CD4-positive, alpha-beta memory T cell (primary cell): ENCODE measurements at regions of chr10 and their contacts with region 1.

Region 1: GRCh38 chr10:110210674-110211464 is 3.5 kb downstream of the MXI1 start:
- DNase-seq: peak; percentile 87 to 93 (median 88)
- H3K4me3 ChIP-seq: peak overlapping the region; percentile 42 to 78
- H3K4me3 Mint-ChIP-seq: peak overlapping the region; percentile 91 to 99 (median 94)
- H3K27ac ChIP-seq: peak overlapping the region; percentile 92
- H3K27ac Mint-ChIP-seq: peak overlapping the region; percentile 94 to 99 (median 97)
- H3K4me1 ChIP-seq: peaks cover 59% of the 10 kb centered on the region
- H3K4me1 Mint-ChIP-seq: peaks cover 43 to 86% (median 52%) of the 10 kb centered on the region in 4 donors
- H3K27me3 ChIP-seq: no peaks in the 10 kb centered on the region
- H3K27me3 Mint-ChIP-seq: no peaks in the 10 kb centered on the region

Region 2: GRCh38 chr10:110137142-110137545 is 73.7 kb before region 1 on chr10:
- CTCF ChIA-PET with region 1: interaction called, 111 read pairs
- POLR2A ChIA-PET with region 1: interaction called, 134 read pairs
- intact Hi-C with region 1: loop called (anchors 1 kb)
- DNase-seq: peak; percentile 46 to 70 (median 66)
- H3K4me3 ChIP-seq: no peak overlapping the region
- H3K4me3 Mint-ChIP-seq: peak overlapping the region in 1 of 8 donors; percentile 0
- H3K27ac ChIP-seq: peak overlapping the region; percentile 7
- H3K27ac Mint-ChIP-seq: peak overlapping the region; percentile 7 to 83 (median 18)
- H3K4me1 ChIP-seq: peaks cover 24% of the 10 kb centered on the region
- H3K4me1 Mint-ChIP-seq: peaks cover 17 to 30% (median 26%) of the 10 kb centered on the region in 4 donors
- H3K27me3 ChIP-seq: no peaks in the 10 kb centered on the region
- H3K27me3 Mint-ChIP-seq: no peaks in the 10 kb centered on the region

Region 3: DNA sequence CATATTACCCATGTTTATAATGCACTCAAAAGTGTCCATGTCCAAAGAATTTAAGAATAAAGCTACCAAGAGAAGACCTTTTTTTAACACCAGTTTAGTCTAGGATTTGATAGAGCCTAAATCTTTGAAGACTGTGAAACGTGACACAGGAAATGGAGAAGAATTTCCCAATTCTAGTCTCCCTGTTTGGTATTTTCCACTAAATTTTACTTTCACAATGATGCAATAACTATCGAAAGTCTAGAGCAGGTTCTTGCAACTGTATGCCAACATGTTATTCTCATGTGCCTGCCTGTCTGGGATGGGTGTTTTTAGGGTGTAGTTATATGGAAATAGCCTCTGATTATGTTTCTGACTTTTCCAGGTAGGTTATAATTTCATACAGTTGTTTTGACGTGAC is 10.4 kb before region 1 on chr10:
- CTCF ChIA-PET with region 1: interaction called, 6 read pairs
- POLR2A ChIA-PET with region 1: interaction called, 13 read pairs
- intact Hi-C with region 1: no loop called
- DNase-seq: no peak
- H3K4me3 ChIP-seq: no peak overlapping the region
- H3K4me3 Mint-ChIP-seq: no peak overlapping the region
- H3K27ac ChIP-seq: no peak overlapping the region
- H3K27ac Mint-ChIP-seq: no peak overlapping the region
- H3K4me1 ChIP-seq: no peaks in the 10 kb centered on the region
- H3K4me1 Mint-ChIP-seq: peaks cover 0 to under 1% (median 0%) of the 10 kb centered on the region in 4 donors
- H3K27me3 ChIP-seq: peaks cover 6% of the 10 kb centered on the region
- H3K27me3 Mint-ChIP-seq: peaks cover 10 to 13% of the 10 kb centered on the region in 2 donors

Region 4: GRCh38 chr10:110254467-110254866 is 43.6 kb after region 1 on chr10:
- CTCF ChIA-PET with region 1: interaction called, 3 read pairs
- POLR2A ChIA-PET with region 1: interaction called, 12 read pairs
- intact Hi-C with region 1: no loop called
- DNase-seq: no peak
- H3K4me3 ChIP-seq: no peak overlapping the region
- H3K4me3 Mint-ChIP-seq: peak overlapping the region in 7 of 8 donors; percentile 4 to 70 (median 60)
- H3K27ac ChIP-seq: no peak overlapping the region
- H3K27ac Mint-ChIP-seq: peak overlapping the region in 5 of 7 donors; percentile 33 to 77 (median 53)
- H3K4me1 ChIP-seq: peaks cover 15% of the 10 kb centered on the region
- H3K4me1 Mint-ChIP-seq: peaks cover 24 to 43% (median 34%) of the 10 kb centered on the region in 4 donors
- H3K27me3 ChIP-seq: no peaks in the 10 kb centered on the region
- H3K27me3 Mint-ChIP-seq: no peaks in the 10 kb centered on the region

Region 5: GRCh38 chr10:110304780-110305421 is 94.0 kb after region 1 on chr10 and contains the start of gene SMNDC1:
- CTCF ChIA-PET with region 1: interaction called, 37 read pairs
- POLR2A ChIA-PET with region 1: interaction called, 81 read pairs
- intact Hi-C with region 1: loop called (anchors 1 kb)
- DNase-seq: peak; percentile 96 to 97 (median 96)
- H3K4me3 ChIP-seq: peak within 1 kb of the TSS; percentile 62 to 70
- H3K4me3 Mint-ChIP-seq: peak within 1 kb of the TSS; percentile 96 to 98 (median 98)
- H3K27ac ChIP-seq: peak within 1 kb of the TSS; percentile 81
- H3K27ac Mint-ChIP-seq: peak within 1 kb of the TSS; percentile 95 to 100 (median 99)
- H3K4me1 ChIP-seq: peaks cover 52% of the 10 kb centered on the region
- H3K4me1 Mint-ChIP-seq: peaks cover 27 to 58% (median 45%) of the 10 kb centered on the region in 4 donors
- H3K27me3 ChIP-seq: no peaks in the 10 kb centered on the region
- H3K27me3 Mint-ChIP-seq: no peaks in the 10 kb centered on the region
- total RNA-seq, gene SMNDC1: 39.0 to 39.3 TPM

Region 6: DNA sequence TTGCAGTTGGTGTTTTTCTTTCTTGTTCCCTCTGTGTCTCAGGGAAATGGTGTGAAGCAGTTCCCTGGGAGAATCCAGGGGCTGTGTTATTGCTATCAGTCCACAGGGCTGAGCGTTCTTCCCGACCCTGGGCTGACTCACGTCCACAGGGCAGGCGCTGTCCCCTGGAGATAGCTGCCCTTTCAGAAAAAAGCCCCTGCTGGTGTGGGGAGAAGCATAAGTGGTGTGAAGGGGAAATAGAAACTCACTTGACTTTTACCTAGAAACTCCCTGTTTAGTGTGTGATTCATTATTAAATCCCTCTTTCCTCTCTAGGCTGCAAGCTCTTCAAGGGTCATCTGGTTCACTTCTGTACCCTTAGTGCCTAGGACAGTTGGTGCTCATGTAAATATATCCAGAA is 157.1 kb after region 1 on chr10:
- CTCF ChIA-PET with region 1: no interaction called
- POLR2A ChIA-PET with region 1: no interaction called
- intact Hi-C with region 1: no loop called
- DNase-seq: no peak
- H3K4me3 ChIP-seq: no peak overlapping the region
- H3K4me3 Mint-ChIP-seq: no peak overlapping the region
- H3K27ac ChIP-seq: no peak overlapping the region
- H3K27ac Mint-ChIP-seq: peak overlapping the region in 1 of 7 donors; percentile 59
- H3K4me1 ChIP-seq: peaks cover 18% of the 10 kb centered on the region
- H3K4me1 Mint-ChIP-seq: peaks cover 11 to 18% (median 15%) of the 10 kb centered on the region in 4 donors
- H3K27me3 ChIP-seq: no peaks in the 10 kb centered on the region
- H3K27me3 Mint-ChIP-seq: no peaks in the 10 kb centered on the region

Region 7: GRCh38 chr10:110567201-110568054 is 356.6 kb after region 1 on chr10 and contains the start of gene SMC3:
- CTCF ChIA-PET with region 1: no interaction called
- POLR2A ChIA-PET with region 1: interaction called, 8 read pairs
- intact Hi-C with region 1: loop called (anchors 5 kb)
- DNase-seq: peak; percentile 91 to 96 (median 93)
- H3K4me3 ChIP-seq: peak within 1 kb of the TSS; percentile 72 to 93
- H3K4me3 Mint-ChIP-seq: peak within 1 kb of the TSS; percentile 91 to 97 (median 96)
- H3K27ac ChIP-seq: peak within 1 kb of the TSS; percentile 90
- H3K27ac Mint-ChIP-seq: peak within 1 kb of the TSS; percentile 95 to 99 (median 98)
- H3K4me1 ChIP-seq: peaks cover 45% of the 10 kb centered on the region
- H3K4me1 Mint-ChIP-seq: peaks cover 26 to 51% (median 36%) of the 10 kb centered on the region in 4 donors
- H3K27me3 ChIP-seq: no peaks in the 10 kb centered on the region
- H3K27me3 Mint-ChIP-seq: peaks cover 1 to 12% of the 10 kb centered on the region in 2 donors
- total RNA-seq, gene SMC3: 53.4 to 59.5 TPM